ENCODE measurements at regions of chr16 and their contacts with region 1.

Region 1: GRCh38 chr16:29848420-29849297 is 14.4 kb downstream of the CDIPT start:
- DNase-seq: no peak
- H3K4me3 ChIP-seq: no peak overlapping the region
- CTCF ChIP-seq: peak; percentile 90

Region 2: DNA sequence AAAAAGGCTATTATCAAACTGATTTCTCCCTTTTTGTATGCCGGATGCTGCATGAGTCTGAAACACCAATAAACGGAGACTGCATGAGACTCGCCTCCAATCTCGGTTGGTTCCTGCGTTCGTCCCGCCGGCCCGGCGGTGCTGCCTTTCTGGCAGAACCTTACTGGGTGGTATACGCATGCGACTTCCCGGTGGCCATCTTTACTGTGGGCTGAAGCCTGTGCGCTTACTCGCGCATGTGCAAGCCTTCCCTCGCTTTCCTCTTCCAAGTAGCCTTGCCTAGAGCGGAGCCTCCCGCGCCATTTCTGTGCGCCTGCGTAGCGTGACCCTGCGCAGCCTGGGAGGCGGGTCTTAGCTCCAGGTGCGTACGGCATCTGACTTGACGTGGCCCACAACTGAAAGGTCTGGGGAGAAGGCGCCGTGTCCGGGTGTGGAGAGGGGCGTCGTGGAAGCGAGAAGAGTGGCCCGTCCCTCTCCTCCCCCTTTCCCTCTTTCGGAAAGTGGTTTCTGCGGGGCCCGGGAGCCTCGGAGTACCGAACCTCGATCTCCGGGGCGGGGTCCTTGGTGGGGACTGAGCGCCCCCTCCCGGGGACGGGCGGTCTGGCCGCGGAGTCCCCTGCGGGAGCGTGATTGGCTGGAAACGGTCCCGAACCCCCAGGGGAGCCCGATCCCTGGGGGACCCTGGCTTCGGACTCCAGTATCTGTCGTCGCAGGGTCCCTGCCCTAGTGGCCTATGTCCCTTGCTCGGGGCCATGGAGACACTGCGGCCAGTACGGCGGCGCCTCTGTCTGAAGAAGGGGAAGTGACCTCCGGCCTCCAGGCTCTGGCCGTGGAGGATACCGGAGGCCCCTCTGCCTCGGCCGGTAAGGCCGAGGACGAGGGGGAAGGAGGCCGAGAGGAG is 32.6 kb before region 1 on chr16 and contains the start of gene PAGR1:
- CTCF ChIA-PET with region 1: interaction called, 99 read pairs
- POLR2A ChIA-PET with region 1: interaction called, 4 read pairs
- DNase-seq: peak; percentile 98
- H3K4me3 ChIP-seq: peak within 1 kb of the TSS; percentile 85
- CTCF ChIP-seq: peak; percentile 91

Region 3: DNA sequence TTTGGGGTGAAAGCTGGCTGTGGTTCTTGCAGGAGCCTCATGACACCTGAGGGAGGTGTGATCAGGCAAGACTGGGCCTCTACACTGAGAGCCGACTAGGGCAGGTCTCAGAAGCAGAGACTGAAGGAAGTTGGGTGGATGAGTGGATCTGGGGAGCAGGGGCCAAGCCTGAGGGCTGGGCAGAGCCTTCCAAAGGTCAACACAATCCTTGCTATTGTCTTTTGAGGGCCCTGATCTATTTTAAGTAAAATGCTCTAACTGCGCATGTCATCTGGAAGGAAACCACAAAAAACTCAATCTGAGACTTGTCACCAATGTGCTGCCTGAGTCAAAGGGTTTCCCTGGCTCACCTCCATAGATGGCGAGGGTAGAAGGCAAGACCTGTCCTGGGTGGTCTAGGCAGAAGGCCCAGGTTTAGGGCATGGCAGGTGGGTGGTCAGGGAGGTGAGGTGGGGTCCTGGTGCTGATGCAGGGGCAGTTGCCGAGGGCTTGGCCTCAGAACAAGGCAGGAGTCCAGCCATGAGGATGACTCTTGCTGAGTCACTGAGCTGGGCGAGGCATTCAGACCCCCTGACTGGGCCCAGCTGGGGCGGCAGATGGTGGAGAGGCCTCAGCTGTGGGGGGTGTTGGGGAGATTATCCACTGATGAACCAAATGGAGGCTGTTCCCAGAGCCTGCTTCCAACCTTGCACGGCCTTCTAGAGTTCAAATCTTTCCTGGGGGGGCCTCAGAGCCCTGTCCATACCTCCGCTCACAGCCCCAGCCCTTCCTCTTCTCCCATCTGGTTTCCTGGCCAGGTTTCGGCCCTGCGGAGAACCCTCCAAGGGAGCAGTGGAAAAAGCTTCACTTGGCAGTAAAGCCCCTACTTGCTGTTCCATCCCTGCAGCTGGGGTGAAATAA is 23.3 kb before region 1 on chr16:
- CTCF ChIA-PET with region 1: interaction called, 99 read pairs
- POLR2A ChIA-PET with region 1: interaction called, 4 read pairs
- DNase-seq: no peak
- H3K4me3 ChIP-seq: peak overlapping the region; percentile 23
- CTCF ChIP-seq: no peak

Region 4: GRCh38 chr16:29862884-29863668 is 14.4 kb after region 1 on chr16 and contains the start of gene CDIPT:
- CTCF ChIA-PET with region 1: interaction called, 63 read pairs
- POLR2A ChIA-PET with region 1: no interaction called
- DNase-seq: peak; percentile 84
- H3K4me3 ChIP-seq: peak within 1 kb of the TSS; percentile 93
- CTCF ChIP-seq: peak; percentile 89